Heart left ventricle (tissue), 16 donors: ENCODE measurements at regions of chr2 and their contacts with region 1.

Region 1: DNA sequence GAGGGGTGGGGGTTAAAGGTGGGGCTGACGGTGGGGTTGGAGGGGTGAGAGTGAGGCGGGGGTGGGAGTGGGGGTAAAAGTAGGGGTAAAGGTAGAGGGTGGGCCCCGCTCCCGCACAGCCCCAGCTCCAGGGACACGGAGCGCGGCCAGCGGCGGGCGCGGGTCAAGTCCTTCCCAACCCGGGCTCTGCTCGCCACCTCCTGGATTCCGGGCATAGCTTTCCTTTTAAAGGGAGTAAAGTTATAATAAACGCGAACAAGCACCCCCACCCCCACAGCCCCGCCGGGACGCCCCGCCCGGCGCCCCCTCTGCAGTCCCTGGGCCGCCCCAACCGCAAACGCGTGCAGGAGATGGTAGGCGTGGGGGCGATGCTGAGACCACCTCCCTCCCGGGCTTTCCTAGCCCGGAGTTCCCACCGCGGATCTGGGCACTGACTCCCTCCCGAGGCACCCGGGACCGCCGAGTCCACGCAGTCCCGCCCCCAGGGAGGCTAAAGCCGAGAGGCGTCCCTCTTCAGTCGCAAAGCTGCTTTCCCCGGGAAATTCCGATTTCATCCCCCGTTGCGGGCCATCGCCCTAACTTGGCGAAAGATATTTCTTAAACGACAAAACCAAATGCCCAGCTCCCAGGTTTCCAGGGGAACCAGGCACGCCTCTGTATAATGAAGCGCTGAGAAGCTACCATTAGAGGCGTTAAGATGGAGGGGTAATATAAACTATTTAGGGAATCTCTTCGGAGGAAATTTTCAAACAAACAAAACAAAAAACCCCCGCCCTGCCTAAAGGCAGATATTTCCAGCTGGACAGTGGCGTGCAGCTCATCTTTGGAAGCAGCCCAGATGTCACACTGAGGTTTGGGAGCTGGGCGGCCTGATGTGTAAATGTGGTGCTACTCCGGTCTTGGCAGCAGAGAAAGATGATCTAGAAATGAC is at the start of gene LIMS2:
- DNase-seq: peak; percentile 74 to 81 (median 78)
- ATAC-seq: peak; percentile 33 to 66 (median 49)
- H3K4me3 ChIP-seq: peak within 1 kb of the TSS; percentile 69 to 98 (median 86)
- H3K27ac ChIP-seq: peak within 1 kb of the TSS; percentile 88 to 100 (median 96)
- H3K4me1 ChIP-seq: peaks cover 0 to 61% (median 44%) of the 10 kb centered on the region in 12 donors
- H3K27me3 ChIP-seq: peaks cover 0 to 26% (median 0%) of the 10 kb centered on the region in 9 donors
- CTCF ChIP-seq: peak in 10 of 12 donors; percentile 11 to 45 (median 28)
- POLR2A ChIP-seq: peak in 1 of 2 donors; percentile 26
- total RNA-seq, gene LIMS2: 97.1 to 225 (median 158) TPM

Region 2: DNA sequence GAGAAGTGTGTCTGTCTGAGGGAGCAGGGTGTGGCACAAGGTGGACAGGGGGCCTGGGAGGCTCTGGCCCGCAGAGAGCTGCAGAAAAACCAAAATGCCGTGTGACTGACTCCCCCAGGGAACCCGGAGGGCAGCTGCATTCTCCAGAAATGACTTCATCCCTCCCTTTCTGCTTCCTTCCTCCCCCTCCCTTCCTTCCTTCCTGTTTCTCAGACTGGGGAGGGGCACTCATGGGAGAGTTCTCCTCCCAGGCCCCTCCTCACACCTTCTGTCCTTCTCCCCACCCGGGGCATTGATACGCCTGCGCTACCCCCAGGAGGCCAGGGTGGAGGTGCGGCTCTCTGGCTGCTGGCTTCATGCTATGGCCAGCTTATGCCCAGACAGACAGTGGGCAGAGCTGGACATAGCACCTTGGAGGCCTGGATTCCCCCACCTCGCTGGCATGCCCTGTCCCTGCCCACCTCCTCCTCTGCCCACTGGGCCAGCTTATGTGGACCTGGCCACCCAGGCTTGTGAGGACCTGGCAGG is 37.8 kb before region 1 on chr2:
- intact Hi-C with region 1: loop called in 4 of 10 experiments (anchors 5 kb)
- DNase-seq: peak; percentile 65 to 78 (median 69)
- ATAC-seq: peak; percentile 11 to 59 (median 20)
- H3K4me3 ChIP-seq: peak overlapping the region in 1 of 12 donors; percentile 1
- H3K27ac ChIP-seq: peak overlapping the region; percentile 76 to 96 (median 89)
- H3K4me1 ChIP-seq: peaks cover 20 to 90% (median 66%) of the 10 kb centered on the region in 12 donors
- H3K27me3 ChIP-seq: no peaks in the 10 kb centered on the region
- CTCF ChIP-seq: no peak
- POLR2A ChIP-seq: no peak

Region 3: DNA sequence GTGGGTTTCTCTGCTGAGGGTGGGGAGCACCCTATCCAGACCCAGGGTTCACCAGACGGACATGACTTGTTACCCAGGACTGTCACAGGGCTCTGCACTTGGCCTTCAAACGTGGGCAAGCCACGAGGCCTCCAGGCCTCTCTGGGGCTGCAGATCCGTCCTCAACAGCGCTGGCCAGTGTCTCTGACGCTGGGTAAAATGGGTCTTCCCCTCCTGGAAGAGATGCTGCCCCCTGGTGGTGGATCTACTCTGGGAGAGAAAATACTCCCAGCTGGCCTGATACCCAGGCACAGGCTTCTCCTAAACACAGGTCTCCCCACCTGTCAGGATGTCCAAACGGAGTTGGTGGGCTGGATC is 25.9 kb before region 1 on chr2:
- intact Hi-C with region 1: loop called in 4 of 10 experiments (anchors 2 to 5 kb)
- DNase-seq: peak; percentile 84 to 93 (median 85)
- ATAC-seq: peak; percentile 8 to 38 (median 18)
- H3K4me3 ChIP-seq: no peak overlapping the region
- H3K27ac ChIP-seq: peak overlapping the region; percentile 50 to 98 (median 84)
- H3K4me1 ChIP-seq: peaks cover 29 to 91% (median 80%) of the 10 kb centered on the region in 12 donors
- H3K27me3 ChIP-seq: no peaks in the 10 kb centered on the region
- CTCF ChIP-seq: peak; percentile 73 to 93 (median 88)
- POLR2A ChIP-seq: no peak

Region 4: DNA sequence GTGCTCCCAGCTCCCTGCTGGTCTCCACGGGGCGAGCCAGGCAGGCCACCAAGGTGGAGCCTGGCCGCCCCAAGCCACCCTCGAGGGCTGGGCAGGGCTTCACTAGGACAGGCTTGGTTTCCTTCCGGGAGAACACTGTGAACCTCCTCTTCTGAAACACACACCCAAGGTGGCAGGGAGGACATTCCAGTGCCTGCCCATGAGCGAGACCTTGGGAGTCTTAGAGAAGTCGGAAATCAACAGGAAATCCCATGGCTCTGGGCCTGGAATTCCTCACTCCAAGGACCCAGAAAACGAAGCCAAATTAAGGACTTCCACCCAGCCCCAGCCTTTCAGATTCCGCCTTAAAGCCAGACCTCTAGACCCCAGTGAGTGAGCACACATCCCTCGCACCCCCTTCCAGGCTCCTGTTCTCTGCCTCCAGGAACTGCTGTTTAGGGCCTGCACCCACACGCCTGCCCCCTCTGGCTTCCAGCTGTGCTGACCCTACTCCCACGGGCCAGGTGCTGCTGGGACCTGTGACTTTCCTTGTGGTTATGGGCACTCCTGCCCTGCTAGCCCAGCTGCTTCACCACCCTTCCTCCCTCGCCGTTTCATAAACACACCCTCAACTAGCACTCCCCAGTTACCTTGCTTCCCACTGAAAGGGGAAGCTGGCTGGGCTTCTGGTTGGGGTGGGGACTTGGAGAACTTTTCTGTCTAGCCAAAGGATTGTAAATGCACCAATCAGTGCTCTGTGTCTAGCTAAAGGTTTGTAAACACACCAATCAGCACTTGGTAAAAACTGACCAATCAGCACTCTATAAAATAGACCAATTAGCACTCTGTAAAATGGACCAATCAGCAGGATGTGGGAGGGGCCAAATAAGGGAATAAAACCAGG is 15.9 kb before region 1 on chr2:
- intact Hi-C with region 1: loop called in 2 of 10 experiments (anchors 2 kb)
- DNase-seq: peak; percentile 72 to 83 (median 74)
- ATAC-seq: peak; percentile 45 to 64 (median 46)
- H3K4me3 ChIP-seq: peak overlapping the region in 2 of 12 donors; percentile 12 to 13
- H3K27ac ChIP-seq: peak overlapping the region; percentile 76 to 98 (median 87)
- H3K4me1 ChIP-seq: peaks cover 24 to 99% (median 92%) of the 10 kb centered on the region in 12 donors
- H3K27me3 ChIP-seq: peaks cover 0 to 15% (median 0%) of the 10 kb centered on the region in 9 donors
- CTCF ChIP-seq: no peak
- POLR2A ChIP-seq: no peak

Region 5: GRCh38 chr2:127690696-127691095 is 15.1 kb after region 1 on chr2:
- intact Hi-C with region 1: no loop called
- DNase-seq: no peak
- ATAC-seq: no peak
- H3K4me3 ChIP-seq: no peak overlapping the region
- H3K27ac ChIP-seq: no peak overlapping the region
- H3K4me1 ChIP-seq: peaks cover 0 to 10% (median 4%) of the 10 kb centered on the region in 12 donors
- H3K27me3 ChIP-seq: no peaks in the 10 kb centered on the region
- CTCF ChIP-seq: no peak
- POLR2A ChIP-seq: no peak

Region 6: GRCh38 chr2:128054104-128054503 is 378.5 kb after region 1 on chr2:
- intact Hi-C with region 1: no loop called
- DNase-seq: no peak
- ATAC-seq: no peak
- H3K4me3 ChIP-seq: no peak overlapping the region
- H3K27ac ChIP-seq: no peak overlapping the region
- H3K4me1 ChIP-seq: no peaks in the 10 kb centered on the region
- H3K27me3 ChIP-seq: peaks cover 0 to 3% (median 0%) of the 10 kb centered on the region in 9 donors
- CTCF ChIP-seq: no peak
- POLR2A ChIP-seq: no peak